ENCODE measurements at regions of chr10 and their contacts with region 1.

Region 1: DNA sequence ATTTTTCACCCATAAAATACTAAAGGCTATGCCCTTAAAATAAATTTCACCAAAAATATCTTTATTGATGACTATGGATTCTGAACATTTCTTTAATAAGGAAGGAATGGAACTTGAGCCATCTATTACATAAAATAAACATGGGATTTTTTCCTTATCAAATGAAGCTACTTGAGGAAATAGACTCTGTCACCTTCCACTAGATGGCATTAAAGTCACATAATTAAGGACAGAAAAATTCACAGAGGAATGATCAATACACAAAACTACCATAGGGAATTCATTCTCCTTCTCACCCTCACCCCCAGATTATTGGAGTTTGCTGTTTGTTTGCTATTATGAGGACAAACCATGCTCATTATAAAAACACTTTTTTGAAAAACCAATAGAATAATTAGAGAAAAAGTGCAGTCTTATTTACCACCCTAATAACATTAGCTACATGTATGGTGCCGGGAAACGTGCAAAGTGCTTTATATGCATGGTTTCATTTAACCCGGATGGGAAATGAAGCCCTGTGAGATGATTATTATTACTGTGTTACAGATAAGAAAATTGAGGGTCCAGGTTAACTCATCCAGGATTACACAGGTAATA is 21.1 kb upstream of the FOXI2 start:
- DNase-seq: peak; percentile 46
- ATAC-seq: peak; percentile 68
- H3K4me3 ChIP-seq: no peak overlapping the region
- H3K27ac ChIP-seq: no peak overlapping the region
- H3K4me1 ChIP-seq: no peaks in the 10 kb centered on the region
- H3K27me3 ChIP-seq: peaks cover 36% of the 10 kb centered on the region
- CTCF ChIP-seq: peak; percentile 41 to 73 (median 65); a peak in 5 of 6 replicates
- POLR2A ChIP-seq: no peak
- RAD21 ChIP-seq: peak; percentile 78

Region 2: GRCh38 chr10:127600479-127600878 is 115.4 kb before region 1 on chr10:
- CTCF ChIA-PET with region 1: no interaction called
- POLR2A ChIA-PET with region 1: no interaction called
- RAD21 ChIA-PET with region 1: no interaction called
- intact Hi-C with region 1: no loop called
- DNase-seq: no peak
- ATAC-seq: no peak
- H3K4me3 ChIP-seq: no peak overlapping the region
- H3K27ac ChIP-seq: no peak overlapping the region
- H3K4me1 ChIP-seq: no peaks in the 10 kb centered on the region
- H3K27me3 ChIP-seq: peaks cover 15% of the 10 kb centered on the region; the same call in 1 of the 2 replicates
- CTCF ChIP-seq: no peak
- POLR2A ChIP-seq: no peak
- RAD21 ChIP-seq: no peak

Region 3: DNA sequence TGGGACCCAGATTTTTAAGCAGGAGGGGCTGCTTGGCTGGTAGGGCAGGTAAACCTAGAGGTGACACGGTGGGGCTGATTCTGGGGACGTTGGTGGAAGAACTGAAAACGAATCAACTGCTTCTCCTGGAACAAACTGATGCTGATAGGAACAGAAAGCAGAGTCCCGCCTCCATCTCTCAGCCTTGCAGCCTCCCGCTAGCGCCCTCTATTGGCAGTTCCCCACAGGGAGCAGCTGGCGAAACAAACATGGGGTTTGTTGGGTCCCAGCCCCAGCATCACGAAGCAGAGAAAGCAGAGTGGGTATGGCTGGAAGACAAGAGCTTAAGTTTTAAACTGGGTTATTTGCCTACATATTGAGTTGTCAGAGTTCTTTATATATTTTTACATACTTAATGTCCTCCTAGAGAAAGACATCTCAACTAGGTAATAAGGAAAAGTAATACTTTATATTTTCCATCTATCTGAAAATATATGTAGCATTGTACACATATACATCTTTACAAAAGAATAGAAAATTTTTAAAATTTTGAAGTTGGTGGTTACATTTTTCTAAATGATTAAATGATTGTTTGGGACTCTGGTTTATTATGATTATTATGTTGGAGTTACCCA is 21.2 kb before region 1 on chr10:
- CTCF ChIA-PET with region 1: interaction called, 16 read pairs
- POLR2A ChIA-PET with region 1: no interaction called
- RAD21 ChIA-PET with region 1: no interaction called
- intact Hi-C with region 1: no loop called
- DNase-seq: peak; percentile 85
- ATAC-seq: peak; percentile 98
- H3K4me3 ChIP-seq: no peak overlapping the region
- H3K27ac ChIP-seq: no peak overlapping the region
- H3K4me1 ChIP-seq: no peaks in the 10 kb centered on the region
- H3K27me3 ChIP-seq: peaks cover 25% of the 10 kb centered on the region
- CTCF ChIP-seq: peak; percentile 66 to 100 (median 100)
- POLR2A ChIP-seq: no peak
- RAD21 ChIP-seq: peak; percentile 56

Region 4: GRCh38 chr10:127813290-127813689 is 97.4 kb after region 1 on chr10:
- CTCF ChIA-PET with region 1: interaction called, 29 read pairs
- POLR2A ChIA-PET with region 1: no interaction called
- RAD21 ChIA-PET with region 1: interaction called in 1 of 2 experiments, 3 read pairs
- intact Hi-C with region 1: loop called (anchors 1 kb)
- DNase-seq: peak; percentile 16
- ATAC-seq: peak; percentile 64; the same call in 1 of the 2 replicates
- H3K4me3 ChIP-seq: no peak overlapping the region
- H3K27ac ChIP-seq: no peak overlapping the region
- H3K4me1 ChIP-seq: no peaks in the 10 kb centered on the region
- H3K27me3 ChIP-seq: peaks cover 48% of the 10 kb centered on the region
- CTCF ChIP-seq: peak; percentile 35 to 46 (median 44); a peak in 4 of 6 replicates
- POLR2A ChIP-seq: no peak
- RAD21 ChIP-seq: peak; percentile 57

Region 5: DNA sequence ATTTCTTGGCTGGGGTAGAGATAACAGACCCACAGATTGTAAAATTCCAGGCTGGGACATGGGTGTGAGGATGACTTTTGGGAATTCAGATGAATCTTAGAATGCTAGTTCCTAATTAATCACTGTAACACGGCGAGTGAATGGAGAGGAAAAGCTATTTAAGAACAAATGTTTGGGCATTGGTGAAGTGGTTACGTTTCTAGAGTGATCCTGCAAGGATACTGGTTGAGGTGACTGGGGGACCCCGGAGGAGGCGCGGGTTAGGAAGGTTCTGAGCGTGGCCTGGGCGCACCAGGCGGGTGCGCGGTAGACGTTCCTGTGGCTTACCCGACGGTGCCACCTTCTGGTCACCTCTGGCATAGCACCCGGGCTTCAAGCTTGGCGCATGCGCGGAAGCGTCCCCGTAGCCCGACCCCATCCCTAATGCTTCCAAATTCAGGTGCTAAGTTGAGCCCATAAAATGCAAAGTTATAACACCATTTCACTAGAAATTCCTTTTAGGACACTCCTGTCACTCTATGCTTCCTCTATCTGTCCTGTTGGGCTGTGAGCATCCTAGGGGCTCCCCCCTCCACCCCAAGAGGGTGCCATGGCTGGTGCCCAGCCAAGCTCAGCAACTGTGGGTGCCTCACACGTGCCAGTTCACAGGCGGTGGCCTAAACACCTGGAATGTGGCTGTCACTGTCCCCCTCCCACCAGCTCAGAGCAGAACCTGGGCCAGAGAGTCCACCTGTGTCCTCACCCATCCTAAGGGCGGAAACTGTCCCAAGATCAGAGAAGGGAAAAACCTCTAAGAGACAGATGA is 295.5 kb after region 1 on chr10:
- CTCF ChIA-PET with region 1: interaction called, 16 read pairs
- POLR2A ChIA-PET with region 1: no interaction called
- RAD21 ChIA-PET with region 1: interaction called in 1 of 2 experiments, 4 read pairs
- intact Hi-C with region 1: loop called (anchors 2 kb)
- DNase-seq: peak; percentile 54
- ATAC-seq: peak; percentile 95
- H3K4me3 ChIP-seq: no peak overlapping the region; a peak in 1 of 4 replicates
- H3K27ac ChIP-seq: no peak overlapping the region
- H3K4me1 ChIP-seq: peaks cover 3 to 9% of the 10 kb centered on the region in 2 experiments; a peak in 3 of 4 replicates
- H3K27me3 ChIP-seq: no peaks in the 10 kb centered on the region; the same call in 1 of the 2 replicates
- CTCF ChIP-seq: peak; percentile 98 to 99 (median 99)
- POLR2A ChIP-seq: no peak
- RAD21 ChIP-seq: peak; percentile 100

Region 6: DNA sequence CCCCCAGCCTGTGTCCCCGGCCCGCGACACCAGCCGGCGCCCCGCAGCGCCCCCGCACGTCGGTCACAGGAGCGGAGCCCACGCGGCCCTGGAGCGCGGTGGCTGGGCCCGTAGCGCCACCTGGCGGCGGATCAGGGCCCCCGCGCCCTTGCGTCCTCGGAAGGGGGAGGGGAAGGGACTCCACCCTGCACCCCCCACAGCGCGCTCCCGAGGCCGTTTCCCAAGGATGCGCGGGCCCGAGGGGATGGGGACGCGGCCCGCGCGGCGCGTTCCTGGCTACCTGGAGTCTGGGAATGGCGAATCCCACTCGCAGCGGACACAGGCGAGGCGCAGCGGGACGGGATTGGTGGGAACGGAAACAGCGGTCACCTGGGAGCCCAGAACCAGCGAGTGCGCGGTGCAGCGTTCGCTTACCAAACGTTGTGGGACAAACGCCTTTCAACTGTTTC is 434.2 kb after region 1 on chr10:
- CTCF ChIA-PET with region 1: no interaction called
- POLR2A ChIA-PET with region 1: no interaction called
- RAD21 ChIA-PET with region 1: no interaction called
- intact Hi-C with region 1: loop called (anchors 5 kb)
- DNase-seq: peak; percentile 53
- ATAC-seq: peak; percentile 97
- H3K4me3 ChIP-seq: no peak overlapping the region
- H3K27ac ChIP-seq: no peak overlapping the region
- H3K4me1 ChIP-seq: peaks cover 0 to 10% of the 10 kb centered on the region in 2 experiments; a peak in 2 of 4 replicates
- H3K27me3 ChIP-seq: no peaks in the 10 kb centered on the region
- CTCF ChIP-seq: peak; percentile 87 to 99 (median 98)
- POLR2A ChIP-seq: no peak
- RAD21 ChIP-seq: peak; percentile 95